IMR-90 (cell line): ENCODE measurements at regions of chr13 and their contacts with region 1.

Region 1: DNA sequence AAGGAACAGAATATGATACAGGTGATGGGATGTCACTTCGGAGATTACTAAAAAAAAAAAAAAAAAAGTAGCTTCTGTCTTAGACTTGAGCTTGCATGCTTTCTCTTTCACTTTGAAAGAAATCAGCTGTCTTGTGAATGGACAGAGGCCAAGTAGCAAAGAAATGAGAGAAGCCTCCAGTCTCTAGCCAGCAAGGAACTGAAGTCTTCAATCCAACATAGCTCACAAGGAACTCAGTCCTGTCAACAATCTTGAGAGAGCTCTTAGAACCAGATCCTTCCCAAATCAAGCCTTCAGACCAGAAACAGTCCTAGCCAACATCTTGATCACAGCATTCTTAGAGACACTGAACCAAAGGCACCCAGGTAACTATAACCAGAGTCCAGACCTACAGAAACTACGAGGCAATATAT is 7.7 kb downstream of the N4BP2L2 start:
- DNase-seq: peak; percentile 83
- ATAC-seq: peak; percentile 69
- H3K4me3 ChIP-seq: no peak overlapping the region
- H3K27ac ChIP-seq: peak overlapping the region; percentile 46; the same call in 1 of the 2 replicates
- H3K4me1 ChIP-seq: peaks cover 8% of the 10 kb centered on the region
- H3K27me3 ChIP-seq: no peaks in the 10 kb centered on the region
- CTCF ChIP-seq: no peak
- POLR2A ChIP-seq: no peak
- RAD21 ChIP-seq: no peak

Region 2: DNA sequence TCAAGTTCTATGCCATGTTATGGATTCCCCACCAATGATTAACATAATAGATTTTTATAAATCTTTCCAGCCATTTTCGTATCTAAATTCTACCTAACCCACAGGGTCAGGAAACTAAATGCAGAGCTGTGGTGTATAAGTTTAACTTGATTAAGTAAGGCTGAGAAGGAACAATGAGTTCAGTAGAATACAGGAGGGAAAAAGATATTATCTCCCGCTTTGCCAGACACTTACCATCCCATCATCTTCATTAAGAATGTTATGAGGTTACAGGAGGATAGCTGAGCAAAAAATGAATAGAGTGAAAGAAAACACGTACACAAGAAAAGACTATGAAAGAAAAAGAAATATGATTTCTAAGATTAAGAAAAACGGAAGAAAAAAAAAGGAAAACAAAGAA is 19.4 kb before region 1 on chr13:
- CTCF ChIA-PET with region 1: no interaction called
- POLR2A ChIA-PET with region 1: no interaction called
- dilution Hi-C with region 1: no loop called
- in situ Hi-C with region 1: no loop called
- intact Hi-C with region 1: loop called (anchors 2 kb)
- DNase-seq: no peak
- ATAC-seq: no peak
- H3K4me3 ChIP-seq: no peak overlapping the region
- H3K27ac ChIP-seq: no peak overlapping the region
- H3K4me1 ChIP-seq: no peaks in the 10 kb centered on the region
- H3K27me3 ChIP-seq: no peaks in the 10 kb centered on the region
- CTCF ChIP-seq: no peak
- POLR2A ChIP-seq: no peak
- RAD21 ChIP-seq: no peak